CD4-positive, alpha-beta memory T cell (primary cell): ENCODE measurements at regions of chrX and their contacts with region 1.

Region 1: DNA sequence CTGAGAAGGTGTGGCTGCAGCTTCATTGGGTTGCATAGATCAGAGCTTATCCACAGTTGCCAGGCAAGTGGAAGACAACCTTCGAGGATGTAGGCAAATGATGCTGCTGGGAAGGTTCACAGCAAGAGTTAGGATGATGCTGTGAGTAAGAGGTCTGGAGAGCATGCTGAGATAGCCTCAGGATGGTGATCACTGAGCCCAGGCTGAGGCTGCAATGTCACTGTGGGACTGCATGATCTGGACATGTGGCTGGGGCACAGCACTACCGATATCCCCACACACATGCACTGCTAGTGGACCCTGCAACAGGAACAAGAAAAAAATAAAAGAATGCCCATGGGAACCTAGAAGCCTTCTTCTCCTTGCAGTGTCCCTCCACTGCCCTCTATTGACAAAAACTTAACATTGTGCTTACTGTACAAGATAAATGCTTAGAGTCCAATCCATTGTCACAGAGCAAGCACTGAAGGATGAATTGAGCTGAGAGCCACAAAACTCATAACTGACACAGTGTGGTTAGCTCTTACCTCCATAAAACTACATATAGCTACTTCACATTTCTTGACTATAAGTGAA is 105.6 kb downstream of the CNKSR2 start:
- DNase-seq: peak in 4 of 5 donors; percentile 33 to 49 (median 37)
- H3K4me3 ChIP-seq: no peak overlapping the region
- H3K4me3 Mint-ChIP-seq: no peak overlapping the region
- H3K27ac ChIP-seq: no peak overlapping the region
- H3K27ac Mint-ChIP-seq: peak overlapping the region in 1 of 7 donors; percentile 60
- H3K4me1 ChIP-seq: no peaks in the 10 kb centered on the region
- H3K4me1 Mint-ChIP-seq: no peaks in the 10 kb centered on the region
- H3K27me3 ChIP-seq: no peaks in the 10 kb centered on the region
- H3K27me3 Mint-ChIP-seq: no peaks in the 10 kb centered on the region

Region 2: DNA sequence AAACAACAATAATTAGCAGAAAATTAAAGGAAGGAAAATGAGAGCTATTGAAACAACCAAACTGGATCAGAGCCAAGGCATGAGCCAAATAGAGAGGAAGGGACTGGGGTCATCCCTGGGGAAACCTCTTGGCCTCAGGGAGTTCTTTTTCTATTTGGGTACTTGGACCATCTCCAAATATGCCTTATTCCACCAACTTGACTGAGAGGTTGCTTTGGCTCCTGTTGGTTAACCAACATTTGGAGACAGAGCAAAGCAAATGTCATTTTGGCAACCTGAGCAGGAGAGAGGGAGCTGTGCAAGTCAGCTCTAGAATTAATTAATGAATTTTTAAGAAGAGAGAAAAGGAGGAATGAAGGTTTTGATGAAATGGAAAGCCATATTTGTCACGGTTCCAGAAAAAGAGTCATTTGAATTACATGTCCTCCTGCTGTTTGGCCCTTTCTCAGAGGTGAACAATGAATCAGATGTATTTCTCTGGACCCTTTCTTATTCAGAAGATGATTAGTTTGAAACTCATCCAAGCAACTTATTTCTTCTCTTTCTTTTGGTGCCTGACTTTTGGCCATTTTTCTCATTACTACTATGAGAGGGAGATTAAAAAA is 13.5 kb after region 1 on chrX:
- CTCF ChIA-PET with region 1: interaction called, 13 read pairs
- POLR2A ChIA-PET with region 1: no interaction called
- intact Hi-C with region 1: no loop called
- DNase-seq: no peak
- H3K4me3 ChIP-seq: no peak overlapping the region
- H3K4me3 Mint-ChIP-seq: no peak overlapping the region
- H3K27ac ChIP-seq: no peak overlapping the region
- H3K27ac Mint-ChIP-seq: no peak overlapping the region
- H3K4me1 ChIP-seq: no peaks in the 10 kb centered on the region
- H3K4me1 Mint-ChIP-seq: no peaks in the 10 kb centered on the region
- H3K27me3 ChIP-seq: no peaks in the 10 kb centered on the region
- H3K27me3 Mint-ChIP-seq: no peaks in the 10 kb centered on the region

Region 3: GRCh38 chrX:21725496-21725895 is 245.7 kb after region 1 on chrX:
- CTCF ChIA-PET with region 1: no interaction called
- POLR2A ChIA-PET with region 1: no interaction called
- intact Hi-C with region 1: loop called (anchors 10 kb)
- DNase-seq: peak in 1 of 5 donors; percentile 3
- H3K4me3 ChIP-seq: no peak overlapping the region
- H3K4me3 Mint-ChIP-seq: no peak overlapping the region
- H3K27ac ChIP-seq: no peak overlapping the region
- H3K27ac Mint-ChIP-seq: no peak overlapping the region
- H3K4me1 ChIP-seq: no peaks in the 10 kb centered on the region
- H3K4me1 Mint-ChIP-seq: no peaks in the 10 kb centered on the region
- H3K27me3 ChIP-seq: no peaks in the 10 kb centered on the region
- H3K27me3 Mint-ChIP-seq: no peaks in the 10 kb centered on the region